Caco-2 (cell line): ENCODE measurements at regions of chr4 and their contacts with region 1.

Region 1: GRCh38 chr4:117847849-117848248 is 186.4 kb upstream of the NDST3 start:
- DNase-seq: no peak
- H3K4me3 ChIP-seq: no peak overlapping the region
- H3K4me3 Mint-ChIP-seq: no peak overlapping the region
- H3K27ac Mint-ChIP-seq: no peak overlapping the region
- H3K4me1 ChIP-seq: no peaks in the 10 kb centered on the region
- H3K4me1 Mint-ChIP-seq: no peaks in the 10 kb centered on the region
- H3K27me3 ChIP-seq: no peaks in the 10 kb centered on the region
- H3K27me3 Mint-ChIP-seq: no peaks in the 10 kb centered on the region
- CTCF ChIP-seq: no peak

Region 2: DNA sequence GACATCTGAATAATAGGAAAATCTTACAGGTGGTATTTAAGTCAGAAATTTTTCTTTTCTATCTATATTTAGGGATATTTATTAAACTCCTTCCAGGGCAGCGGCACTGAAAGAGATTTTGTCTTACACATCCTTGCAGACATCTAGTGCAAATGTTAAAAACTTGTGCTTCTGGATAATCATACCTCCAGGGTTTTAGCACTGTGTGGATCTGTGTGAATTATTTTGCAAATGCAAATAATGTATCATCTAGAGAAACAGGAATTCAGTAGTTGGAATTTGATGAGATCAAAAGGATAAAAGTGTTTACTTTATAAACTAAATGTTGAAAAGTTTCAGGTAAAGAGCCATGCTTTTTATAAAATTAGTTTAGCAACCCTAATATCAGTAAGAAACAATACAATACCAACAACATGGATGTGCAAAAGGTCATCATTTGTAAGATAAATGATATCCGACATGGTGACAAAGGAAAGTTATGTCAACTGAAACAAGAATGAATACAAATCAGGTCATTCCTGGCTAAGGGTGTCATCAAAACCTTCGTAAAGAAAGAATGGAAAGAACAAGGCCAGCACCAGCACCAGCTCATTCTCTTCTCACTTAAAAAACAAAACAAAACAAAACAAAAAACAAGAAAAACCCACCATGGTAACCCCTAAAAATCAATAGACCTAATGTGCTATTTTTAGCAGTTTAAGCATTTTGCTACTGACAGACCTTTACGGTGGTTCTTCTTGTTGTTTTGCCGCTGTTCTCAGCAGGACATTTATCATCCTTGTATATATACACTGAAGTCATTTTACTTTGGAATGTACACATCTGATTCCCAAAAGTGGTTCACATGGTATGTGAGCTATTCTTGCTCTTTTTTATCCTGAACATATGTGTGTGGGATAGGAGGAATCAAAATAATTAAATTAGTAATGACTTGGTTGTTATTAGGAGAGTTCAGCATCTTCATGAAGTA is 33.3 kb before region 1 on chr4:
- CTCF ChIA-PET with region 1: no interaction called
- POLR2A ChIA-PET with region 1: no interaction called
- intact Hi-C with region 1: no loop called
- DNase-seq: no peak
- H3K4me3 ChIP-seq: no peak overlapping the region
- H3K4me3 Mint-ChIP-seq: no peak overlapping the region
- H3K27ac Mint-ChIP-seq: no peak overlapping the region
- H3K4me1 ChIP-seq: no peaks in the 10 kb centered on the region
- H3K4me1 Mint-ChIP-seq: no peaks in the 10 kb centered on the region
- H3K27me3 ChIP-seq: no peaks in the 10 kb centered on the region
- H3K27me3 Mint-ChIP-seq: no peaks in the 10 kb centered on the region
- CTCF ChIP-seq: no peak

Region 3: GRCh38 chr4:117825600-117825999 is 22.2 kb before region 1 on chr4:
- CTCF ChIA-PET with region 1: no interaction called
- POLR2A ChIA-PET with region 1: no interaction called
- intact Hi-C with region 1: no loop called
- DNase-seq: no peak
- H3K4me3 ChIP-seq: no peak overlapping the region
- H3K4me3 Mint-ChIP-seq: no peak overlapping the region
- H3K27ac Mint-ChIP-seq: no peak overlapping the region
- H3K4me1 ChIP-seq: no peaks in the 10 kb centered on the region
- H3K4me1 Mint-ChIP-seq: no peaks in the 10 kb centered on the region
- H3K27me3 ChIP-seq: no peaks in the 10 kb centered on the region
- H3K27me3 Mint-ChIP-seq: no peaks in the 10 kb centered on the region
- CTCF ChIP-seq: no peak

Region 4: GRCh38 chr4:117898496-117898895 is 50.6 kb after region 1 on chr4:
- CTCF ChIA-PET with region 1: no interaction called
- POLR2A ChIA-PET with region 1: no interaction called
- intact Hi-C with region 1: loop called (anchors 5 kb)
- DNase-seq: no peak
- H3K4me3 ChIP-seq: no peak overlapping the region
- H3K4me3 Mint-ChIP-seq: no peak overlapping the region
- H3K27ac Mint-ChIP-seq: no peak overlapping the region
- H3K4me1 ChIP-seq: no peaks in the 10 kb centered on the region
- H3K4me1 Mint-ChIP-seq: no peaks in the 10 kb centered on the region
- H3K27me3 ChIP-seq: no peaks in the 10 kb centered on the region
- H3K27me3 Mint-ChIP-seq: peaks cover 6% of the 10 kb centered on the region
- CTCF ChIP-seq: no peak